AG04449 (cell line): ENCODE measurements at regions of chr9 and their contacts with region 1.

Region 1: DNA sequence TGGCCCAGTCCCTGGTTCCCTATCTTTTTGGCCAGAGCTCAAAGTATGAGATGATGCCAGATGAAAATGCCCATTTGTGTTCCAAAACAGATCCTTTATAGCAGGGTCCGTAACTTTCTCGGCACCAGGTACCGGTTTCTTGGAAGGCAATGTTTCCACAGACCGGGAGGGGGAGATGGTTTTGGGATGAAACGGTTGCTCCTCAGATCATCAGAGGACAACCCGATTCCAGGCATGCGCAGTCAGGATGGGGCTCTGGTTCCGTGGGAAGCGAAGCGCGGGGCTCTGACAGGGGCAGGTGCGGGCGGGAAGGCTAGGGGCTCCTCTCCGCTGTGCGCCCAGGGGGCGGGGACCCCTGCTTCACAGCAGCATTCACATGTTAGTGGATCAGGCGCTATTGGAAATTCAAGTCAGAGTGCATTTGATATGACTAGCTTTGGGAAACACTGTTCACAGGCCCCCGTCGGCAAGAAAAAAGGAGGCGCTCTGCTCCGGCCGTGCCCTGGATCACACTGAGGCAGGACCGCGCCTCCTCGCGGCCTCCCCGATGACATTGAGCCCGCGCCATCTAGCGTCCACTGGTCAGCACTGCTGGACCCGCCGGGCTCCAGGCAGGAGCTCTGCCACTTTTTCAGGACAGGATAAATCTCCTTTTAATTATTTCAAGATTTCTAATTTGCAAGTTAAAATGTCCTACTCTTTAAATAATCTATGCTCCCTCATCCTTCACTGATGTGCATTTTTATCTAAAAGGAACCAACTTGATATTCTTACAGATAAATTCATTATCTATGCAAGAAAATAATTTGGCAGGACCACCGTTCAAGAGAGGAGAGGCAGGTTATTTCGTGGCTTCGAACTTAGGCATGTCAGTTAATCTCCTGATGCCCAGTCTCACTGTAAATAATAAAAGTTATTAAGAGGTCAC is 190.0 kb downstream of the FANCC start:
- DNase-seq: no peak
- H3K4me3 ChIP-seq: peak overlapping the region; percentile 41
- CTCF ChIP-seq: peak; percentile 100

Region 2: GRCh38 chr9:94672811-94673487 is 454.6 kb before region 1 on chr9:
- CTCF ChIA-PET with region 1: interaction called, 341 read pairs
- POLR2A ChIA-PET with region 1: interaction called, 3 read pairs
- DNase-seq: no peak
- H3K4me3 ChIP-seq: no peak overlapping the region
- CTCF ChIP-seq: no peak

Region 3: DNA sequence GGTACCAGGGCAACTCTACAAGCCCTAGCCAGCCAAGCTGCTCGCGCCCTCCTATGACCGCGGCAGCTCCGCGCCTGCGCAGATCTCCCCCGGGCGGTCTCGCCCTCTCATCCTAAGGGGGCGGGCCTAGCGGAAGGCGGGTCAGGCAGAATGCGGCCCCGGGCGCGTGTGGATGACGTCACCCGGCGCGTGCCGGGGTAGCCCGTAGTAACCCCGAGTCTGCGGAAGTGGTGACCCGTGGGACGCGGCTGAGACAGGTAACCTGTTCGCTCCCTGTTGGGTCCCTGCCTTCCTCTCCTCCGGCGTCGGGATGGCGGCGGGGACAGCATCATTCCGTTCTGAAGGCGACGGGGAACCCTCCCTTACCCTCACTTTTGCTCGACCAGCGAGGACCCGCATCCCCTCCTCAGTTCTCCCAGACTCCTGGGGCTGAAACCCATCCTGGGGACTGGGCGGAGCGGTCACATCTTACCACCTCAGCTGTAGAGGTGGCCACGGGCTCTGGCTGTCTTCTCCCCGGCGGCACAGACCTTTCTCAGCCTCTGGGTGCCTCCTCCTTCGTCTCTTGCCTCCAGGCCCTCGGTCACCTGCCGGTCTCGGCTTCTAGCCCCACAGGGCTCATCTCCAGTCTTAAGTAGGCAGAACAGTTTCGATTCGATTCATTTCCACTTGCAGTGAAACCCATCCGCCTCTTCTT is 400.9 kb before region 1 on chr9 and contains the start of gene AOPEP:
- CTCF ChIA-PET with region 1: interaction called, 11 read pairs
- POLR2A ChIA-PET with region 1: no interaction called
- DNase-seq: peak; percentile 55
- H3K4me3 ChIP-seq: peak within 1 kb of the TSS; percentile 94
- CTCF ChIP-seq: no peak

Region 4: GRCh38 chr9:95025213-95026147 is 102.0 kb before region 1 on chr9:
- CTCF ChIA-PET with region 1: interaction called, 11 read pairs
- POLR2A ChIA-PET with region 1: no interaction called
- DNase-seq: peak; percentile 88
- H3K4me3 ChIP-seq: no peak overlapping the region
- CTCF ChIP-seq: peak; percentile 47

Region 5: GRCh38 chr9:95107001-95107749 is 20.3 kb before region 1 on chr9:
- CTCF ChIA-PET with region 1: interaction called, 91 read pairs
- POLR2A ChIA-PET with region 1: no interaction called
- DNase-seq: peak; percentile 41
- H3K4me3 ChIP-seq: no peak overlapping the region; the same call in 1 of the 2 replicates
- CTCF ChIP-seq: no peak

Region 6: GRCh38 chr9:95150903-95151302 is 23.4 kb after region 1 on chr9:
- CTCF ChIA-PET with region 1: interaction called, 34 read pairs
- POLR2A ChIA-PET with region 1: no interaction called
- DNase-seq: no peak
- H3K4me3 ChIP-seq: no peak overlapping the region
- CTCF ChIP-seq: no peak

Region 7: GRCh38 chr9:95409650-95410426 is 282.3 kb after region 1 on chr9:
- CTCF ChIA-PET with region 1: no interaction called
- POLR2A ChIA-PET with region 1: no interaction called
- DNase-seq: peak; percentile 67
- H3K4me3 ChIP-seq: peak overlapping the region; percentile 29
- CTCF ChIP-seq: no peak